ENCODE measurements at regions of chr17 and their contacts with region 1.

Region 1: GRCh38 chr17:7045909-7046724 is 2.2 kb upstream of the SLC16A11 start:
- DNase-seq: peak; percentile 63
- H3K4me3 Mint-ChIP-seq: peak overlapping the region; percentile 70
- H3K27ac Mint-ChIP-seq: peak overlapping the region; percentile 87
- H3K4me1 Mint-ChIP-seq: peaks cover 45% of the 10 kb centered on the region
- H3K27me3 Mint-ChIP-seq: peaks cover 2% of the 10 kb centered on the region

Region 2: DNA sequence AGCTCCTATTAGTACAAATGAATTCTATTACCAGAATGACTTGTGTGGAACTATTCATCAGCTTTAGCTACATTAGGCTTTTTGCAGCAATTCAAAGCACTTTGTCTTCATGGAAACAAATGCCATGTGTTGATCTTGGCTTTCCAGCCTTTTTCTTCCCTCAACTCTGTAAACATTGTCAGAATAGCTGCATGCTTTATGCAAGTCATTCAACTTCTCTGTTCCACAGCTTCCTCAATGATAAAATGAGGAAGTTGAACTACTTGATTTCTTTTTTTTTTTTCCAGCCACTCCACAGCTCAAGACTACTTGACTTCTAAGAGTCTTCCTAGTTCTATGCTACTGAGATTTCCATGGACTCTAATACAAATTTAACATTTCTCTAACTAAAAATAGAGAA is 446.8 kb before region 1 on chr17:
- CTCF ChIA-PET with region 1: no interaction called
- POLR2A ChIA-PET with region 1: no interaction called
- intact Hi-C with region 1: no loop called
- DNase-seq: no peak
- H3K4me3 Mint-ChIP-seq: no peak overlapping the region
- H3K27ac Mint-ChIP-seq: no peak overlapping the region
- H3K4me1 Mint-ChIP-seq: peaks cover 7% of the 10 kb centered on the region
- H3K27me3 Mint-ChIP-seq: no peaks in the 10 kb centered on the region

Region 3: GRCh38 chr17:7004398-7005253 is 41.5 kb before region 1 on chr17:
- CTCF ChIA-PET with region 1: interaction called, 14 read pairs
- POLR2A ChIA-PET with region 1: no interaction called
- intact Hi-C with region 1: no loop called
- DNase-seq: no peak
- H3K4me3 Mint-ChIP-seq: no peak overlapping the region
- H3K27ac Mint-ChIP-seq: peak overlapping the region; percentile 49
- H3K4me1 Mint-ChIP-seq: peaks cover 22% of the 10 kb centered on the region
- H3K27me3 Mint-ChIP-seq: no peaks in the 10 kb centered on the region

Region 4: GRCh38 chr17:7035591-7036368 is 10.3 kb before region 1 on chr17 and contains the start of gene SLC16A13:
- CTCF ChIA-PET with region 1: interaction called, 38 read pairs
- POLR2A ChIA-PET with region 1: interaction called, 26 read pairs
- intact Hi-C with region 1: loop called (anchors 1 kb)
- DNase-seq: peak; percentile 99
- H3K4me3 Mint-ChIP-seq: peak within 1 kb of the TSS; percentile 94
- H3K27ac Mint-ChIP-seq: peak within 1 kb of the TSS; percentile 99
- H3K4me1 Mint-ChIP-seq: peaks cover 48% of the 10 kb centered on the region
- H3K27me3 Mint-ChIP-seq: no peaks in the 10 kb centered on the region
- total RNA-seq, gene SLC16A13: 10.4 to 10.7 TPM

Region 5: DNA sequence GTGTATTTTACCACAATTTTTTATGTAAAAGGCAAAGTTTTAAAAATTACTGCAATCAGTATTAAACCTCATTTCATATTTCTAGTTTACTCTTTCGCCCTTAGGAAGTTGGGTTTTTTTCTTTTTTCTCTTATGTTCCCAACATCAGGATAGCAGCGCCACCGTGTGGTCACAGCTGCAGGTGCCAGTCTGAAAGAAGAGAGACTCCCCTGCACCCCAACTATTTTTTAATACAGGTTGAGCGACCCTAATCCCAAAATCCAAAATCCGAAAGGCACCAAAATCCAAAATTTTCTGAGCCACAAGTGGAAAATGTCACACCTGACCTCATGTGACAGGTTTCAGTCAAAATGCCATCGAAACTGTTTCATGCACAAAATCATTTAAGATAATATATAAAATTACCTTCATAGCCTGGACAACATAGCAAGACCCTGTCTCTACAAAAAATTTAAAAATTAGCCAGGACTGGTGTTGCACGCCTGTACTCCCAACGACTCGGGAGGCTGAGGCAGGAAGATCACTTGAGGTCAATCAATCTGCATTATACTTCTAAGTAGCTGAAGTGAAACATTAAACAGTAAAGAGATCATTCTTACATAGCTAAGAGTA is 90.3 kb after region 1 on chr17:
- CTCF ChIA-PET with region 1: interaction called, 509 read pairs
- POLR2A ChIA-PET with region 1: interaction called, 21 read pairs
- intact Hi-C with region 1: loop called (anchors 1 kb)
- DNase-seq: peak; percentile 82
- H3K4me3 Mint-ChIP-seq: no peak overlapping the region
- H3K27ac Mint-ChIP-seq: no peak overlapping the region
- H3K4me1 Mint-ChIP-seq: peaks cover 17% of the 10 kb centered on the region
- H3K27me3 Mint-ChIP-seq: peaks cover 9% of the 10 kb centered on the region

Region 6: GRCh38 chr17:7214300-7215135 is 168.4 kb after region 1 on chr17:
- CTCF ChIA-PET with region 1: interaction called, 10 read pairs
- POLR2A ChIA-PET with region 1: interaction called, 4 read pairs
- intact Hi-C with region 1: no loop called
- DNase-seq: peak; percentile 100
- H3K4me3 Mint-ChIP-seq: peak overlapping the region; percentile 85
- H3K27ac Mint-ChIP-seq: peak overlapping the region; percentile 89
- H3K4me1 Mint-ChIP-seq: peaks cover 52% of the 10 kb centered on the region
- H3K27me3 Mint-ChIP-seq: peaks cover 7% of the 10 kb centered on the region